Dendritic cell treated with granulocyte-macrophage colony-stimulating factor and Interleukin-4, amounts not matched to agents 40 ng/mL and 50 ng/mL, for 4 days (primary cell): ENCODE measurements at regions of chr1 and their contacts with region 1.

Region 1: GRCh38 chr1:20696397-20697329 is 21.1 kb downstream of the KIF17 start:
- H3K4me3 Mint-ChIP-seq: peak overlapping the region; percentile 82
- H3K27ac Mint-ChIP-seq: peak overlapping the region; percentile 87
- H3K4me1 Mint-ChIP-seq: peaks cover 26% of the 10 kb centered on the region
- H3K27me3 Mint-ChIP-seq: peaks cover 7% of the 10 kb centered on the region

Region 2: DNA sequence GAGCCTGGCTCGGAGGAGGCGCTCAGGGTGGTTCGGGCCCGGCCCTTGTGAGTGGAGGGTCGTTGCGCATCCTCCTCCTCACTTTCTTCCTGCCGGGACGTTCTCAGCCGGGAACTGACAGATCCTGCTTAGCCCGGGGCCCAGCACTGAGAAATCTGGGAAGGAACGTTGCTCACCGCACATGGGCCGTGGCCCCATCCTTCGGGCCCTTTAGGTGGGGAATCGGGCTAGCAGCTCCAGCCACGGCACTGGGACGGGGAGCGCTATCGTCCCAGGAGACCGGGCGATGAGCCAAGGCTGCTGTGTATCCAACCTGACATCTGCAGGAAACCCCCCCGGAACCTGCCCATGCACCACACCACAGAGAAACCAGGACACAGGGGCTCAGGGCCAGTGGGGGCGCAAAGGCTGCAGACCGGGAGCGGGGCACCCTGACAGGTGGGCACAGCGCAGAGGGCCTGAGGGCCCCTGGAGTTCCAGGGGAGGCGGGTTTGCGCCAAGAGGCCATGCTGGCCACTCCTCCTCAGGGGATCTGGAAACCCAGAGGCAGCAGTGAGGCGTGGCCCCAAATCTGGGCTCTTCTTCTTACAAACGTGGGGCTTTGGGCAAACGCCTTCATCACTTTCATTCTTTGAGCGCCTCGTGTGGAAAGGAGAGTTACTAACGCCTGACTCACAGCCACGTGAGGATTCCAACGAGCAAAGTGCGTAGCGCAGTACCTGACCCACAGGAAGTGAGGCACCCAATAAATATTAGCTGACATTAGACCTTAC is 36.1 kb after region 1 on chr1 and contains the start of gene SH2D5:
- intact Hi-C with region 1: loop called (anchors 2 kb)
- H3K4me3 Mint-ChIP-seq: peak within 1 kb of the TSS; percentile 87
- H3K27ac Mint-ChIP-seq: peak within 1 kb of the TSS; percentile 15
- H3K4me1 Mint-ChIP-seq: peaks cover 26% of the 10 kb centered on the region
- H3K27me3 Mint-ChIP-seq: peaks cover 57% of the 10 kb centered on the region

Region 3: DNA sequence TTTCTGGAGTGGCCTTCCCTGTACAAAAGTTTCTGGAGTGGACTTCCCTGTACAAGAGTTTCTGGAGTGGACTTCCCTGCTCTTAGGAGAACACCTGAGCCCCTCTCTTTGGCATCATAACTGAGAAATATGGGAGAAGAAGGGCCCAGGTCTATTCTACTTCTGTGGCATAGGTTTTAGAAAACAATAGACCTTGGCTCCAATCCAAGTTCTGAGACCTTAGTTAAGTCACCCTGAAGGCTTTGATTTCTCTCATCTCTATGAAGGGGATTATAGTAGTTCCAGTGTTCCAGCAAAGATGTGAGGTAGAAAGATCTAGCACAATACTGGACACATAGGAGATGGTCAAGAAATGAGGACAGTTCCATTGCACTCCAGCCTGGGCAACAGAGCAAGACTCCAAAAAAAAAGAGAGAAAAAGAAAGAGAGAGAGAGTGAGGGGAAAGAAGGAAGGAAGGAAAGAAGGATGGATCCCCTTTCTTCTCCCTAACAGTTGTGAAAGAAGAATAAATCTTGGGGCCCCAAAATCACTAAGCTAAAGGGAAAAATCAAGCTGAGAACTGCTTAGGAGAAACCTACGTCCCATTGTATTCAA is 493.3 kb after region 1 on chr1:
- intact Hi-C with region 1: loop called (anchors 10 kb)
- H3K4me3 Mint-ChIP-seq: no peak overlapping the region
- H3K27ac Mint-ChIP-seq: peak overlapping the region; percentile 72
- H3K4me1 Mint-ChIP-seq: peaks cover 19% of the 10 kb centered on the region
- H3K27me3 Mint-ChIP-seq: peaks cover 15% of the 10 kb centered on the region